ENCODE measurements at regions of chr5 and their contacts with region 1.

Region 1: DNA sequence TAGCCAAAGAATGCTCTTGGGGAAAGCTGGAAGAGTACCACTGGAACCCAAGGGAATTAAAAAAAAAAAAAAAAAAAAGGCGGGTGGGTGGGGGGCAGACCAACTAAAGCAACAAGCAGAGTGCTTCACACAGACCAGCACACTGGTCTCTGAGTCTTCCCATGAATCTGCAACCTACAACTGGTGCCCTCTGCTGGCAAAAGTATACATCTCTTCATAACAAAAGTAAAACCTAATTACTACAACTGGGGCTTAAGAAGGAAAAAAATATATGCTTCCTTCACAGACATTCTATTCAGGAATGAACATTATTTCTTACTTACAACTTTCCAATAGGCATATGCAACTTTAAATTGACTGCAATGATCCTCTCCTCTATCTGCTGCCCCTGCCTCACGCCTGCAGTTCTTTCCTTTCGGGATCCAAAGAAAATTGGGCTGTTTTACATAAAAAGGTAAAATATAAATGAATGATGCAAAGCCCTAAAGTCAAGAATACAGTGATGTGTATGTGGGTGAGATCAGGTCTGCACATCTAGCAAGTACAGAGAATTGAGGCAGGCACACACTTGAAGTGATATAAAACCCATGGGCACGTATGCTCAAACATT is 7.2 kb upstream of the KLHL3 start:
- DNase-seq: peak; percentile 87
- H3K4me3 ChIP-seq: no peak overlapping the region
- H3K27ac ChIP-seq: no peak overlapping the region
- H3K4me1 ChIP-seq: no peaks in the 10 kb centered on the region
- H3K27me3 ChIP-seq: no peaks in the 10 kb centered on the region
- CTCF ChIP-seq: peak; percentile 70

Region 2: DNA sequence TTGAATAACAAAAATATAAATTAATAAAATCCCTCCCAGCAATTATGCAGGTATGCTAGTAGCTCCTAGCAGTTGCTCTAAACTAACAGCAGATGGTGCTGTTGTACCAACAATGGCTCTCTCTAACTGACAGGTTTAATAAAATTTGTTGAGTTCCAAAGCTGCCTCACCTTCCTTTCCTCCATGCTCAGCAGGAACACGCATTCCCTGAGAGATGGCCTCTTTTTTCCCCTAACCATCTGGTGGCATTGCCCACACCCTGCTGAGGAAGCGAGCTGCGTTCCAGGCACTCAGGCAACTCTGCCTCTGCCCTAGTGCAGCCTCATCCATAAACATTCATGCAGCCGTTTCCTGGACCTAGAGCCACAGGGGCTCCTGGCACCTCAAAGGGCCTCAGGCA is 113.5 kb before region 1 on chr5:
- CTCF ChIA-PET with region 1: interaction called, 17 read pairs
- POLR2A ChIA-PET with region 1: no interaction called
- intact Hi-C with region 1: loop called (anchors 1 kb)
- DNase-seq: peak; percentile 67
- H3K4me3 ChIP-seq: no peak overlapping the region
- H3K27ac ChIP-seq: no peak overlapping the region
- H3K4me1 ChIP-seq: no peaks in the 10 kb centered on the region
- H3K27me3 ChIP-seq: no peaks in the 10 kb centered on the region
- CTCF ChIP-seq: peak; percentile 87

Region 3: GRCh38 chr5:137800700-137801411 is 57.7 kb after region 1 on chr5:
- CTCF ChIA-PET with region 1: interaction called, 14 read pairs
- POLR2A ChIA-PET with region 1: no interaction called
- intact Hi-C with region 1: no loop called
- DNase-seq: no peak
- H3K4me3 ChIP-seq: no peak overlapping the region
- H3K27ac ChIP-seq: no peak overlapping the region
- H3K4me1 ChIP-seq: no peaks in the 10 kb centered on the region
- H3K27me3 ChIP-seq: peaks cover 14% of the 10 kb centered on the region
- CTCF ChIP-seq: no peak

Region 4: DNA sequence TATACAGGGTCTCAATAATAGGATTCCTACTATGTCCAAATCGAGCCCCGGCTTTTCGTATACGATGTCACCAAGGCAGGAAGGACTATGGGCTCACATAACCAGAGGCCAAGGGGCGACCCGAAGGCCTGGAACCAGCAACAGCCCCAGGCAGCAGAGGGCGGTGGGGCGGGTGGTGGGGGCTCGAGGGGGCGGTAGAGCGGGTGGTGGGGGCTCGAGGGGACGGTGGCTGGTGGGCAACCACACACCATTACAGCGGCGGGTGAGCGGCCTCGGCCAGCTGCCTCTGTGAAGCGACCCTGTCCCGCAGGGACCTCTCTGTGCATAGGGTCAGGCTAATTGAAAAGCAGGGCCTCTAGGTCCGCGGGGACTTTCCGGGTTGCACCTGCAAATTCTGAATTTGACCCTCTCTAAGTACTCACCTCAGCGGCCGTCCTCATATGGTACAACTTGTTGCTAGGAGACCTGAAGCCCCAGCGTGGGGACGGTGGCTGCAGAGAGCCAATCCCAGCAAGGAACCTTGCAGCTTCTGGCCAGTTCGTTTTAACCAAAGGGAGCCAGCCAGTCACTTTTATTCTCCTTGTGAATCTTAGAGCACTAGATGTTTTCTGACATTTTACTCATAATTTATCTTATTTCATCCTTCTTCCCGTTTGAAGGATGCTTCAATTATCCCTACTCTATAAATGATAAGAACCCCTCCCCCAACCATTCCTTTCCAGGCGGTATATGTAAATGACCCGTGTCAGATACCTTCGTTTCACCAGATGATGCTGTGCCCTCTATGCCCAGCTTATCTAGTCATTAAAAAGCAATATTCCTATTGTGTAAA is 396.0 kb after region 1 on chr5 and contains the start of gene NME5:
- CTCF ChIA-PET with region 1: interaction called, 11 read pairs
- POLR2A ChIA-PET with region 1: no interaction called
- intact Hi-C with region 1: no loop called
- DNase-seq: peak; percentile 30
- H3K4me3 ChIP-seq: peak within 1 kb of the TSS; percentile 32
- H3K27ac ChIP-seq: no peak within 1 kb of the TSS
- H3K4me1 ChIP-seq: no peaks in the 10 kb centered on the region
- H3K27me3 ChIP-seq: no peaks in the 10 kb centered on the region
- CTCF ChIP-seq: no peak
- total RNA-seq, gene NME5: 0.72 TPM in 1 of 2 replicates, not detected in the other

Measured in A673 (cell line).